ENCODE measurements at regions of chr9 and their contacts with region 1.

Region 1: GRCh38 chr9:125296833-125297372 is 35.3 kb downstream of the GAPVD1 start:
- DNase-seq: no peak
- ATAC-seq: no peak

Region 2: GRCh38 chr9:125233678-125234077 is 63.2 kb before region 1 on chr9:
- intact Hi-C with region 1: loop called in 1 of 2 experiments (anchors 10 kb)
- DNase-seq: no peak
- ATAC-seq: peak in 1 of 2 donors; percentile 73